ENCODE measurements at regions of chr11 and their contacts with region 1.

Region 1: GRCh38 chr11:35246745-35247144 is 107.8 kb downstream of the CD44 start:
- DNase-seq: no peak
- ATAC-seq: no peak
- H3K4me3 ChIP-seq: no peak overlapping the region
- H3K27ac ChIP-seq: no peak overlapping the region
- H3K4me1 ChIP-seq: no peaks in the 10 kb centered on the region
- H3K27me3 ChIP-seq: no peaks in the 10 kb centered on the region
- CTCF ChIP-seq: no peak
- EP300 ChIP-seq: no peak
- POLR2A ChIP-seq: no peak
- RAD21 ChIP-seq: no peak

Region 2: DNA sequence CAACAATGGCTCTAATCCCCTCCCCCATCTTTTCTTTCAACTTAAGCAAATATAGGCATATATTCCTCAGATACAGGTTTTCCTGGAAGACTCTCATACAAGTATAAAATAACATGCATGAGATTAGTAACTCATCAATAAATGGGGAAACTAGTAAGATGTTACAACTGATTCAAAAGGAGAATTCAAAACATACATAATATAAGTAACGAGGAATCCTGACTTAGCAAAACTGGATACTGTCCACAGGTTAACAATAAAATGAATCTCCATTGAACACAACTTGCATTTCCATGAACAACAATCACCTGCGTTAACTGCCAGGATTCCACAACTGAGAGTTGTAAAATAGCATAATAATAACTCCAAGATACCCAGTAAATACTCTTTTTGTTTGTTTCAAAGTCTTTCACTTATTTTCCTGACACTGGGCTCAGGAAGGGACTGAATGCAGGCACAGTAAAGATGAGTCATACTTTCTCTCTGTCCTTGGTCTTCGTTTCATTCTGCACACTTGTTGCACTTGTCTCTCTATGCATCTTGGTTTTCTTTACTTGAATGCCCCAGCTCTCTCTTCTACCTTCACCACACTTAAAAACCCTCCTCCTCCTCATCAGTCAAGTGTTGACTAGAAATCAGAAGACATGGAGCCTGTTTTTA is 338.7 kb before region 1 on chr11:
- CTCF ChIA-PET with region 1: no interaction called
- POLR2A ChIA-PET with region 1: no interaction called
- RAD21 ChIA-PET with region 1: no interaction called
- SMC1A ChIA-PET with region 1: no interaction called
- in situ Hi-C with region 1: no loop called
- intact Hi-C with region 1: no loop called
- DNase-seq: no peak
- ATAC-seq: peak; percentile 60
- H3K4me3 ChIP-seq: no peak overlapping the region
- H3K27ac ChIP-seq: no peak overlapping the region
- H3K4me1 ChIP-seq: peaks cover 4% of the 10 kb centered on the region; the same call in 1 of the 2 replicates
- H3K27me3 ChIP-seq: no peaks in the 10 kb centered on the region
- CTCF ChIP-seq: no peak
- EP300 ChIP-seq: no peak
- POLR2A ChIP-seq: no peak
- RAD21 ChIP-seq: no peak

Region 3: GRCh38 chr11:35232891-35233330 is 13.8 kb before region 1 on chr11:
- CTCF ChIA-PET with region 1: interaction called, 4 read pairs
- POLR2A ChIA-PET with region 1: no interaction called
- RAD21 ChIA-PET with region 1: interaction called, 3 read pairs
- SMC1A ChIA-PET with region 1: interaction called, 15 read pairs
- in situ Hi-C with region 1: no loop called
- intact Hi-C with region 1: no loop called
- DNase-seq: no peak
- ATAC-seq: no peak
- H3K4me3 ChIP-seq: no peak overlapping the region
- H3K27ac ChIP-seq: no peak overlapping the region
- H3K4me1 ChIP-seq: peaks cover 1% of the 10 kb centered on the region
- H3K27me3 ChIP-seq: no peaks in the 10 kb centered on the region
- CTCF ChIP-seq: no peak
- EP300 ChIP-seq: no peak
- POLR2A ChIP-seq: no peak
- RAD21 ChIP-seq: no peak

Region 4: GRCh38 chr11:35257281-35257680 is 10.5 kb after region 1 on chr11:
- CTCF ChIA-PET with region 1: interaction called, 5 read pairs
- POLR2A ChIA-PET with region 1: interaction called, 3 read pairs
- RAD21 ChIA-PET with region 1: interaction called, 4 read pairs
- SMC1A ChIA-PET with region 1: interaction called, 11 read pairs
- in situ Hi-C with region 1: no loop called
- intact Hi-C with region 1: no loop called
- DNase-seq: peak; percentile 55
- ATAC-seq: peak; percentile 100
- H3K4me3 ChIP-seq: 0 out of 2 replicates have a peak overlapping the region, but pooled peaks have one; percentile 39
- H3K27ac ChIP-seq: no peak overlapping the region
- H3K4me1 ChIP-seq: peaks cover 11% of the 10 kb centered on the region
- H3K27me3 ChIP-seq: no peaks in the 10 kb centered on the region
- CTCF ChIP-seq: no peak
- EP300 ChIP-seq: no peak
- POLR2A ChIP-seq: no peak
- RAD21 ChIP-seq: no peak

Region 5: GRCh38 chr11:35324981-35325380 is 78.2 kb after region 1 on chr11:
- CTCF ChIA-PET with region 1: no interaction called
- POLR2A ChIA-PET with region 1: no interaction called
- RAD21 ChIA-PET with region 1: no interaction called
- SMC1A ChIA-PET with region 1: no interaction called
- in situ Hi-C with region 1: no loop called
- intact Hi-C with region 1: no loop called
- DNase-seq: no peak
- ATAC-seq: no peak
- H3K4me3 ChIP-seq: no peak overlapping the region
- H3K27ac ChIP-seq: no peak overlapping the region
- H3K4me1 ChIP-seq: peaks cover 2% of the 10 kb centered on the region
- H3K27me3 ChIP-seq: no peaks in the 10 kb centered on the region
- CTCF ChIP-seq: no peak
- EP300 ChIP-seq: no peak
- POLR2A ChIP-seq: no peak
- RAD21 ChIP-seq: no peak